ENCODE measurements at regions of chr1 and their contacts with region 1.

Region 1: DNA sequence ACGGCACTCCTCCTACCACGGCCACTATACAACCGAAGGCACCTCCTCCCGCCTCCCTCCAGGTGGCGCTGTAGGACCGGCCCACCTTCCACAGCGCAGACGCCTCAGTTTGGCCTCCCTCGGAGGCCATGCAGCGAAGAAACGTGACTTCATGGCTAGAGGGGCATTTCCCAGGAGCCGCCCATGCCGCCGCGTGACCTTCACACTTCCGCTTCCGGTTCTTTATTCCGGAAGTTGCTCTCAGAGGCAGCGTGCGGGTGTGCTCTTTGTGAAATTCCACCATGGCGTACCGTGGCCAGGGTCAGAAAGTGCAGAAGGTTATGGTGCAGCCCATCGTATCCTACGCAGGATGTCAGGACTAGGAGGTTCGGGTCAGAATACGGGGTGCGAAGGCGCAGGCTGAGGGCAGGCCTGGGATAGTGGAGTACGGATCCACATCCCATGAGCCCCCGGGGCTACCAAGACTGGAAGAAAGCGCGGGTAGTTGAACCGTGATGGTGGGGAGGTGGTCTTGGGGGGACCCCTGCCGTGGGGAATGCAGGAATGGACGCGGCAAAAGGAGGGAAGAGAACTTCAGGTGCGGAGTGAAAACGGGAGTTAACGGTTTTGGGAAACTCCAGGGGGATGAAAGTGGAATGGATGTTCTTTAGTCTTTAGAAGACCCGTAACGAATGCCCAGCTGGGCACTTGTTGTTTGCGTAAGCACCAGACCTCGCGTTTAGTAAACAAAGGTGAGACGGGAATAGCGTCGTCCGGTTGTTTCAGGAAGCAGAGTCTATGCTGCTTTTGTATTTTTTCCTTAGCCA is at the start of gene SNRPE:
- DNase-seq: peak; percentile 95 to 96 (median 95)
- H3K4me3 ChIP-seq: peak within 1 kb of the TSS; percentile 84
- H3K27ac ChIP-seq: peak within 1 kb of the TSS in 1 of 2 donors; percentile 15
- H3K4me1 ChIP-seq: peaks cover 3% of the 10 kb centered on the region
- H3K27me3 ChIP-seq: no peaks in the 10 kb centered on the region
- CTCF ChIP-seq: peak; percentile 95 to 97 (median 97)
- EP300 ChIP-seq: no peak
- POLR2A ChIP-seq: peak; percentile 71
- total RNA-seq, gene SNRPE: 72.5 to 151 (median 127) TPM

Region 2: GRCh38 chr1:204207136-204207616 is 345.6 kb after region 1 on chr1:
- intact Hi-C with region 1: loop called in 2 of 4 experiments (anchors 5 kb)
- DNase-seq: peak; percentile 54 to 77 (median 75)
- H3K4me3 ChIP-seq: no peak overlapping the region
- H3K27ac ChIP-seq: no peak overlapping the region
- H3K4me1 ChIP-seq: peaks cover 1% of the 10 kb centered on the region
- H3K27me3 ChIP-seq: no peaks in the 10 kb centered on the region
- CTCF ChIP-seq: peak; percentile 66 to 75 (median 72)
- EP300 ChIP-seq: no peak
- POLR2A ChIP-seq: no peak

Region 3: DNA sequence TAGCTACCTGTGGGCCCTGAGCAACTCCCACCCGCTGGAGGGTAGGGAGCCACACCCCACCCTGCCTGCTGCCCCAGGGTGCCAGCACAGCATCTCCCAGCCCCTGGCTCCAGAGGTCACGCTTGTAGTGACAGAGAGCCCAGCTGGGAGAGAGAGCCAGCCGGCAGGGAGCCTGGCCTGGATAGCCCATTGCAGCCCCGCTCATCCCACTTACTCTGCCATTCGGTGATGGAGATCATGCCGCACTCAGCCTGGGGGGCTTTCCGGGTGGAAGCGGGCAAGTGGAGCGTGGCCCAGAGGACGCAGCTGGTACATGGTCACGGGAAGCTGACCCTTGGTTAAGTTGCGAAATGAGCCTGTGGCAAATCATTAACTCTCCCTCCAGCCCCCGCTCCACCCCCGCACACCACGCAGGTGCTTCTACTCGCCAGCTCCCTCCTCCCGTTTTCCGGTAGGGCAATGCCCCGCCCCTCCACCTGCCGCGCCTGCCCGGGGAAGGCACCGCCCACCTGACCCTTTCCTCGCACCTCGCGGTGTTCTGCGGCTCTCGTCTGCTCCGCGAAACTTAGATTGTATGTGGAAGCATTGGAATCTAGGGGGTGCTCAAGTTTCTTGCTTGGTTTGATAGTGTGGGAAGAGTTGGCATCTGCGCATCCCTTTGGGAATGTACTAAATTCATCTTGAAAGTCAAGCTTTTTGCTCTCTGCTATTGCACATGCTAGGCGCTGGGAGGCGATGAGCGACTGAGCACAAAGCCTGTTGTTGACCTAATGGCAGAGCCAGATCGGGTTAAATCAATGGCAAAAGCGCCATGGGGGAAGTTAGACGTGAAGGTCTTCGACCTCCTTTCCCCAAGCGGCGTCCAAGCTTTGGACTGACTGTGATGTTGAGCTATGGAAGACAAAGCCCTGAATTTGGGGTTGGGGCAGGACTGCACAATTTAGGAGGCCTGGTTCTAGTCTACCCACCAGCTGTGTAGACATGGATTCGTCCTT is 352.4 kb after region 1 on chr1 and contains the start of gene GOLT1A:
- intact Hi-C with region 1: loop called in 2 of 4 experiments (anchors 5 kb)
- DNase-seq: peak; percentile 50 to 71 (median 58)
- H3K4me3 ChIP-seq: peak within 1 kb of the TSS; percentile 12
- H3K27ac ChIP-seq: no peak within 1 kb of the TSS
- H3K4me1 ChIP-seq: no peaks in the 10 kb centered on the region
- H3K27me3 ChIP-seq: no peaks in the 10 kb centered on the region
- CTCF ChIP-seq: peak in 2 of 3 donors; percentile 63 to 70
- EP300 ChIP-seq: no peak
- POLR2A ChIP-seq: no peak
- total RNA-seq, gene GOLT1A: 0.27 to 3.9 (median 0.41) TPM in 3 of 7 donors, not detected in the others

Measured in ovary (tissue), 10 donors.